PC-3 (cell line): ENCODE measurements at regions of chr2 and their contacts with region 1.

Region 1: GRCh38 chr2:233033672-233034071 is 1.2 kb downstream of the NEU2 start:
- DNase-seq: peak; percentile 96
- ATAC-seq: peak; percentile 56
- H3K4me3 ChIP-seq: no peak overlapping the region
- H3K27ac ChIP-seq: peak overlapping the region; percentile 98
- H3K4me1 ChIP-seq: peaks cover 78% of the 10 kb centered on the region
- H3K27me3 ChIP-seq: no peaks in the 10 kb centered on the region
- CTCF ChIP-seq: no peak

Region 2: GRCh38 chr2:232927793-232928550 is 105.7 kb before region 1 on chr2:
- CTCF ChIA-PET with region 1: interaction called, 3 read pairs
- POLR2A ChIA-PET with region 1: interaction called, 9 read pairs
- intact Hi-C with region 1: loop called (anchors 1 kb)
- DNase-seq: peak; percentile 40
- ATAC-seq: peak; percentile 13
- H3K4me3 ChIP-seq: peak overlapping the region; percentile 71
- H3K27ac ChIP-seq: peak overlapping the region; percentile 47; the same call in 1 of the 2 replicates
- H3K4me1 ChIP-seq: peaks cover 25% of the 10 kb centered on the region
- H3K27me3 ChIP-seq: no peaks in the 10 kb centered on the region
- CTCF ChIP-seq: no peak

Region 3: DNA sequence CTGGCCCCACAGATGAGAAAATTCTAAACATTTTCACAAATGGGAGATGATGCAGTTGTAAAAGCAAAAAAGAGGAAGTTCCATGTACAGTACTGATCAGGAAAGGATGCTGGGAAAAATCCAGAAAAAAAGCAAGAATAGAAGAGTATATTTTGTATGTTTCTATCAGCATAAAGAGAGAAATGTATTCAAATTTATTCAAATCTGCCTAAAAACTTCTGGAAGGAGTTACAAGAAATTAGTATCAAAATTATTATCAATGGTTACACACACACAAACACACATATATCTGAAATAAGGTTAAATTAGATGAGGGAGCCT is 44.9 kb before region 1 on chr2:
- CTCF ChIA-PET with region 1: no interaction called
- POLR2A ChIA-PET with region 1: no interaction called
- intact Hi-C with region 1: loop called (anchors 1 kb)
- DNase-seq: no peak
- ATAC-seq: no peak
- H3K4me3 ChIP-seq: no peak overlapping the region
- H3K27ac ChIP-seq: peak overlapping the region; percentile 98
- H3K4me1 ChIP-seq: peaks cover 29% of the 10 kb centered on the region
- H3K27me3 ChIP-seq: no peaks in the 10 kb centered on the region
- CTCF ChIP-seq: no peak

Region 4: GRCh38 chr2:233061591-233062450 is 28.1 kb after region 1 on chr2:
- CTCF ChIA-PET with region 1: no interaction called
- POLR2A ChIA-PET with region 1: no interaction called
- intact Hi-C with region 1: loop called (anchors 1 kb)
- DNase-seq: peak; percentile 8
- ATAC-seq: peak; percentile 35; the same call in 1 of the 2 replicates
- H3K4me3 ChIP-seq: no peak overlapping the region
- H3K27ac ChIP-seq: no peak overlapping the region
- H3K4me1 ChIP-seq: peaks cover 4% of the 10 kb centered on the region
- H3K27me3 ChIP-seq: no peaks in the 10 kb centered on the region
- CTCF ChIP-seq: 0 out of 2 replicates have a peak, but pooled peaks have one; percentile 11

Region 5: DNA sequence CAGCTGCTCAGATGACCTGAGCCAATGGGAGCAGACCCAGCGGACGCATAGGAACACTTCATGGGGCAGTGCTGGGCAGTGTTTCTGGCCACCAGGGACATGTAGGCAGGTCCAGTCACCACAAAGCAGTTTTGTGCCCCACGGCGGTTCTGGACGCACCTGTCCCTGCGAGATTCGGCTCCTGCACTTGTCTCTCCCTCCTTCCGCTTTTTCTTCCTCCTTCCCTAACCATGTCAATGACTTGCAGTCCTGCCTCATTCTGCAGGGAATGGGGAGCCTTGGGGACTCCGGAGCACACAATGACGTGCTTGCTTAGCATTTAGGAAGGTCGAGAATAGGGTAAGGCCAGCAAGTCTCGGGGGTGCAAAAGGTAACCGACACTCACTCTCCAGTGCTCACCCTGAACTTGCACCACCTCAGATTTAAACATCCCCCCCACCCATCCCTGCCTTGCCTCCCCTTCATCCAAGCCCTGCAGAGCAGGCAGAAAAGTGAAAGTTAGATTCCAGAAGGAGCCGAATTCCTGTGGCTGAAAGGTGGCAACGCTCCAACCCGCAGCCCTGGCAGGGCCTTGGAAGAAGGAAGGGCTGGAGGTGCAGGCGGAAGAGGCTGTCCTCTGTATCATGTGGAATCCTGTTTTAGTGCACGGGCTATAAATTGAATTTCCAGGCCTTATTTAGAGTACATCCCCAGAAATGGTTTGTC is 177.3 kb after region 1 on chr2:
- CTCF ChIA-PET with region 1: no interaction called
- POLR2A ChIA-PET with region 1: no interaction called
- intact Hi-C with region 1: loop called (anchors 1 kb)
- DNase-seq: peak; percentile 95
- ATAC-seq: peak; percentile 81
- H3K4me3 ChIP-seq: no peak overlapping the region
- H3K27ac ChIP-seq: peak overlapping the region; percentile 62
- H3K4me1 ChIP-seq: peaks cover 37% of the 10 kb centered on the region
- H3K27me3 ChIP-seq: no peaks in the 10 kb centered on the region
- CTCF ChIP-seq: no peak